Activated CD4-positive, alpha-beta T cell treated with anti-CD3 and anti-CD28 coated beads for 36 hours (primary cell): ENCODE measurements at regions of chr5 and their contacts with region 1.

Region 1: GRCh38 chr5:165630261-165630778 is 2124.9 kb downstream of the MAT2B start:
- DNase-seq: peak; percentile 28
- ATAC-seq: no peak
- H3K4me3 Mint-ChIP-seq: no peak overlapping the region
- H3K27ac Mint-ChIP-seq: no peak overlapping the region
- H3K4me1 Mint-ChIP-seq: no peaks in the 10 kb centered on the region
- H3K27me3 Mint-ChIP-seq: no peaks in the 10 kb centered on the region

Region 2: GRCh38 chr5:167049043-167049663 is 1418.8 kb after region 1 on chr5:
- CTCF ChIA-PET with region 1: no interaction called
- POLR2A ChIA-PET with region 1: no interaction called
- intact Hi-C with region 1: loop called in 1 of 2 experiments (anchors 5 kb)
- DNase-seq: peak; percentile 32
- ATAC-seq: peak; percentile 44
- H3K4me3 Mint-ChIP-seq: no peak overlapping the region
- H3K27ac Mint-ChIP-seq: no peak overlapping the region
- H3K4me1 Mint-ChIP-seq: no peaks in the 10 kb centered on the region
- H3K27me3 Mint-ChIP-seq: no peaks in the 10 kb centered on the region